T-cell (primary cell): ENCODE measurements at regions of chr10 and their contacts with region 1.

Region 1: GRCh38 chr10:22704471-22704911 is 9.9 kb downstream of the PIP4K2A start:
- DNase-seq: no peak
- ATAC-seq: no peak
- H3K4me3 ChIP-seq: no peak overlapping the region
- H3K4me3 Mint-ChIP-seq: peak overlapping the region in 2 of 3 donors; percentile 32 to 59
- H3K27ac ChIP-seq: peak overlapping the region; percentile 36
- H3K27ac Mint-ChIP-seq: peak overlapping the region; percentile 85 to 93
- H3K4me1 ChIP-seq: peaks cover 20 to 84% of the 10 kb centered on the region in 2 experiments
- H3K4me1 Mint-ChIP-seq: peaks cover 97 to 98% (median 98%) of the 10 kb centered on the region in 3 donors
- H3K27me3 ChIP-seq: no peaks in the 10 kb centered on the region
- H3K27me3 Mint-ChIP-seq: no peaks in the 10 kb centered on the region

Region 2: GRCh38 chr10:22640359-22640758 is 64.1 kb before region 1 on chr10:
- CTCF ChIA-PET with region 1: interaction called in 1 of 2 experiments, 12 read pairs
- POLR2A ChIA-PET with region 1: no interaction called
- DNase-seq: no peak
- ATAC-seq: no peak
- H3K4me3 ChIP-seq: no peak overlapping the region
- H3K4me3 Mint-ChIP-seq: no peak overlapping the region
- H3K27ac ChIP-seq: no peak overlapping the region
- H3K27ac Mint-ChIP-seq: peak overlapping the region; percentile 28 to 75
- H3K4me1 ChIP-seq: peaks cover 37 to 74% of the 10 kb centered on the region in 2 experiments
- H3K4me1 Mint-ChIP-seq: peaks cover 83 to 92% (median 89%) of the 10 kb centered on the region in 3 donors
- H3K27me3 ChIP-seq: no peaks in the 10 kb centered on the region
- H3K27me3 Mint-ChIP-seq: no peaks in the 10 kb centered on the region

Region 3: DNA sequence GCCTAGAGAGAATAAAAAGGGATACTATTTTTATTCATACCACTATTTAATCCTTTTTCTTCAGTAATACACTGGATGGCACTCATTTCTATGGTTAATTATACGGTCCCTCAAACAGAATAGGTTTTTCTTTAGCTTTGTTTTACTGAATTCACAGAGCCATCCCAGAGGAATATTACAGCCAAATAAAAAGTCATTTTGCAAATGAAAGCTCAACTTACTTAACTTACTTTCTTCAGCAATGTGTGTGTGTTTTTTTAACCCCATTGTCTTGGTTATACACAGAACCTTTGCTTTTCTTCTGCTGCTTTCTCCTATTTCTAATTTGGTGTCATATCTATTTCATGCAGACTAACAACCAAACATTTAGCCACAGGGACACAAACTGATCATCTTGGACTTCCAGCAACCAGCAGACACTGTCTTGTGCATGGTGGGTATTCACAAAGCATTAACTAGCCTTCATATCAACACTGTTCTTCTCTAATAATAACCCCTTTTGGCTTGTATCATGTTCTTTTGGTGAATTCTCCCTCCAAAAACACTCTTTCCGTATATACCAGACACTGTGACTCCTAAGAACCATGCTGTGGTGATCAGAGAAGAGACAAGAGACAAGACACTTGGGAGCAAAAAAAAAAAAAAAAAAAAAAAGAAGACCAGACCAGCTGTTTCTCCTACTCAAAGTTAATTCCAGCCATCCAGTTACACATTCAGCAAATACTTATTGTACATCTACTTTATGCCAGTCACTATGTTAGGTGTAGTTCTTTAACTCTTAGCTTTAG is 30.5 kb before region 1 on chr10:
- CTCF ChIA-PET with region 1: interaction called in 1 of 2 experiments, 6 read pairs
- POLR2A ChIA-PET with region 1: interaction called, 4 to 10 read pairs
- DNase-seq: no peak
- ATAC-seq: no peak
- H3K4me3 ChIP-seq: no peak overlapping the region
- H3K4me3 Mint-ChIP-seq: peak overlapping the region in 1 of 3 donors; percentile 5
- H3K27ac ChIP-seq: peak overlapping the region; percentile 17
- H3K27ac Mint-ChIP-seq: peak overlapping the region; percentile 86 to 88
- H3K4me1 ChIP-seq: peaks cover 66 to 84% of the 10 kb centered on the region in 2 experiments
- H3K4me1 Mint-ChIP-seq: peaks cover 89 to 96% (median 93%) of the 10 kb centered on the region in 3 donors
- H3K27me3 ChIP-seq: no peaks in the 10 kb centered on the region
- H3K27me3 Mint-ChIP-seq: no peaks in the 10 kb centered on the region